Tibial artery (tissue), 4 donors: ENCODE measurements at regions of chrX and their contacts with region 1.

Region 1: DNA sequence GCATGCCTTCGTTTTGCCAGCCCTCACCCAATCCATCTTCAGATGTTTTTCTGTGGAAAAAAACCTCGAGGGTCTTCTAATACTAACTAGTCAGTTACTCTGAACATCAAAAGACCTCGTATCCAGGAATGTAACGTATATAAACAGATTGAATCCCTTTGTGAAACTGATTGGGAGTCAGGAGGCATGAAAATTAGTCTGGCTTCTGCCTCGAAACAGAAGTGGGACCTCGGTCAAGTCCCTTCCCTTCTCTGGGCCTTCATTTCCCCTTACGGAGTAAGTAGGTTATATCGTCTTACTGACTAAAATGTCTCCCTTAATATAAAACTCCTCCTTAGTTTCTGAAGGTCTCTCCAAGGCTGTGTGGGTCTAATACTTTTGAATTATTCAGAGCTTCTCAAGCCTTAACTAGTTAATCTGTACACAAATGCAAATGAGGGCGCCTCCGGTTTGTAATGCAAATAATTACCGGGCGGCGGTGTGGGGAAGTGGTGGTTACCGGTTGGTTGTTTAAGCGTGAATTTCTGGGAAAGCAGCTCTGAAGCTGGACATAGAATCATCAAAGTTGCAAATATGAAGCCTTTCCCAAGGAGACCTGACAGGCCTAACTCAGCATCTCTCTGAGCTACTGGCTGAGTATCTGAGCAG is 11.4 kb upstream of the NKRF start:
- DNase-seq: no peak
- H3K4me3 ChIP-seq: no peak overlapping the region
- H3K27ac ChIP-seq: no peak overlapping the region
- H3K4me1 ChIP-seq: no peaks in the 10 kb centered on the region
- H3K27me3 ChIP-seq: no peaks in the 10 kb centered on the region
- CTCF ChIP-seq: no peak

Region 2: GRCh38 chrX:119552508-119552907 is 65.1 kb before region 1 on chrX:
- intact Hi-C with region 1: no loop called
- DNase-seq: no peak
- H3K4me3 ChIP-seq: no peak overlapping the region
- H3K27ac ChIP-seq: no peak overlapping the region
- H3K4me1 ChIP-seq: no peaks in the 10 kb centered on the region
- H3K27me3 ChIP-seq: no peaks in the 10 kb centered on the region
- CTCF ChIP-seq: no peak

Region 3: GRCh38 chrX:119729408-119730201 is 112.0 kb after region 1 on chrX:
- intact Hi-C with region 1: loop called (anchors 5 kb)
- DNase-seq: peak in 1 of 2 donors; percentile 28
- H3K4me3 ChIP-seq: no peak overlapping the region
- H3K27ac ChIP-seq: no peak overlapping the region
- H3K4me1 ChIP-seq: peaks cover 0 to 2% (median under 1%) of the 10 kb centered on the region in 4 donors
- H3K27me3 ChIP-seq: no peaks in the 10 kb centered on the region
- CTCF ChIP-seq: peak; percentile 37 to 42